ENCODE measurements at regions of chr3 and their contacts with region 1.

Region 1: GRCh38 chr3:27521179-27521871 is 37.1 kb upstream of the SLC4A7 start:
- DNase-seq: peak; percentile 76
- H3K4me3 ChIP-seq: no peak overlapping the region
- H3K27ac ChIP-seq: peak overlapping the region; percentile 28 to 83 (median 76)
- H3K4me1 ChIP-seq: peaks cover 0 to 41% (median 38%) of the 10 kb centered on the region in 4 donors
- H3K27me3 ChIP-seq: no peaks in the 10 kb centered on the region
- CTCF ChIP-seq: no peak
- EP300 ChIP-seq: peak in 3 of 4 donors; percentile 29 to 90 (median 75)
- POLR2A ChIP-seq: no peak

Region 2: DNA sequence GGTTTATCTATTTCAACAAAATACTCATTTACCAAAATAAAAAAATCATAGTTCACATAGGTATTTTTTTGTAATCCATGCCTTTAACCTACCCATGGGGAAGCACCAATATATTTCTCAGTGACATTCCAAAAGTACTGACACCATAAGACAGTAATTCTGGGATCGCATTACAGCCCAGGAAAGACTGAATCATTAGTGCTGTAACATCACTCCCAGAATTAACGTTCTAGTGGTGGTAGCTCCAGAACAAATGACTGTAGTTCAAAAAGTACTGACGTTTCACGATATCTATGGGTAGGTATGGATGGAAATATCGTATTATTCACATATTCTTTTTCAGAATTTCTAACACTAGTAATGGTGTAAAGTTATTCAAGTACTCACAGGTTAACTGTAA is 97.9 kb before region 1 on chr3:
- intact Hi-C with region 1: no loop called
- DNase-seq: no peak
- H3K4me3 ChIP-seq: no peak overlapping the region
- H3K27ac ChIP-seq: no peak overlapping the region
- H3K4me1 ChIP-seq: peaks cover 0 to 17% (median 4%) of the 10 kb centered on the region in 4 donors
- H3K27me3 ChIP-seq: no peaks in the 10 kb centered on the region
- CTCF ChIP-seq: no peak
- EP300 ChIP-seq: no peak
- POLR2A ChIP-seq: no peak

Region 3: DNA sequence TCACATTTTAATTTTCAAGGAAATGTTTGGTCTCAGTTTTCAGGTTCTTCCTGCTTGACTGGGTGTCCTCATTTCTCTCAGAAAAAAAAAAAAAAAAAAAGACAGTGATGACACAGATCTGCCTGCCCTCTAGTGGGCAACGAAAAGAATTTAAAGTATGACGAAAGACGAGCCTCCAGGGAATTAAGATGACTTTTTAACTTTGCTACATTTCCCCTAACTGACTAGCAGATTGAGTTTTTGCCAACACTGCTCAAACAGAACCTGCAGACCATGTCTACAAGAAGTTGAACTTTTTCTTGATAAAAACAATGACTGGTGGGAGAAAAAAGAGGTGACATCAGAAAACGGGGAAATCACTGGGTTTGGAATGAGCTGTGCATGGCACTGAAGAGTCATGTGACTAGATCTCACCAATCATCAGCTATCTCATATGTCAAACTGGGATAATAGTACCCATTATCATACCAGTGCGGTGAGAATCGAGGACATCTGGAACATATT is 160.0 kb after region 1 on chr3:
- intact Hi-C with region 1: loop called (anchors 2 kb)
- DNase-seq: no peak
- H3K4me3 ChIP-seq: peak overlapping the region in 3 of 4 donors; percentile 16 to 21 (median 17)
- H3K27ac ChIP-seq: peak overlapping the region in 3 of 4 donors; percentile 10 to 50 (median 47)
- H3K4me1 ChIP-seq: peaks cover 0 to 19% (median 15%) of the 10 kb centered on the region in 4 donors
- H3K27me3 ChIP-seq: no peaks in the 10 kb centered on the region
- CTCF ChIP-seq: peak; percentile 37 to 63 (median 54)
- EP300 ChIP-seq: peak in 1 of 4 donors; percentile 25
- POLR2A ChIP-seq: no peak